AG04449 (cell line): ENCODE measurements at regions of chr3 and their contacts with region 1.

Region 1: DNA sequence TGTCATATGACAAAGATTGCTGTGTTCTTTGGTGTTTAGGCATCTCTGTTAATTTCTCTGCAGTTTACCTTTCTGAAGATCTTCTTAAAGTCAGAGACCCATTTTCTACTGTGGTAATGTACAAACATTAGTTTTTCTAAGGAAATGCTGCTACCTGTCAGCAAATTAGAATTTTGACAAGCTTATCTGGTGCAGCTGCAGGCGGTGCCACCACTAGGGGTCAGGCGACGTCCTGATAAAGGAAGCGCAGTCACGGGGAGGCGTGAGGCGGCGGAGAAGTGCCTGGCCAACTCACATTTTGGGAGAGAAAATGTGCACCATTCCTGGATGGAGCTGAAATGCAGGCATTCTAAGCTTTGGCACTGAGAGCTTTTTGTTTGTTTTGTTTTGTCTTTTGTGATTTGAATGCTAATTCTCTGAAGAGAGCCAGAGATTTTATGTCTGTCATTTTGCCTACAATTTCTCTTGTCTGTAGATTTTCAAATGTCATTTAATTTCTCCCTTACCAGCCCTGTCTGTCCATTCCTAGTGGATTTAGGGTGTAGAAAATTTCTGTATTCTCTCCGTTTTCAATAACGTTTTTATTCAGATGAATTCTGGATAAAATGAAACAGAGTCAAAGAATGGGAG is 24.9 kb upstream of the SIAH2 start:
- DNase-seq: no peak
- H3K4me3 ChIP-seq: no peak overlapping the region
- CTCF ChIP-seq: peak; percentile 91

Region 2: GRCh38 chr3:150763122-150763841 is 24.6 kb before region 1 on chr3 and contains the start of gene SIAH2:
- CTCF ChIA-PET with region 1: interaction called, 53 read pairs
- POLR2A ChIA-PET with region 1: interaction called, 3 read pairs
- DNase-seq: peak; percentile 73
- H3K4me3 ChIP-seq: peak within 1 kb of the TSS; percentile 89
- CTCF ChIP-seq: no peak

Region 3: DNA sequence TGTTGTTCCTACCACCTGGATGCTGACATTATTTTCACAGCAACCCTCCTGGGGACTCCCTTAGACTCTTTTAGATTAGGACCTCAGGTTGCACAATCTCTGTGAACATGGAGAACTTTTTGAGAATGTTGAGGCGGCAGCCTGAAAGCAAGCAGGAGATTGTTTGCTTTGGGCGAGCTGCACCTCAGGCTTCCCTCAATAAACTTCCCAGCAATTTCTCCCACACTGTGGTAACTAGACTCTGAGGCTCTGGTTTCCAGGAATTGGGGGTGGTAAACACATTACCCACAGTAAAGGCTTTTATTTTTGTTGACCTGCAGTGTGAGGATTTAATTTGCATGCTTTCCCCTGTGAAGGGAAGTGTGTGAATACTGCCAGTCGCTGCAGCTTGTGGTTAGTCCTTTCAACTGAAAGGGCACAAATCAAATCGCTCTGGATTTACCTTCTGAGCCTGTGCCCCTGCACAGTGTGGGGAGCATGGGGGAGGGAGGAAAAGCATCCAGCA is 10.3 kb after region 1 on chr3:
- CTCF ChIA-PET with region 1: interaction called, 20 read pairs
- POLR2A ChIA-PET with region 1: no interaction called
- DNase-seq: no peak
- H3K4me3 ChIP-seq: no peak overlapping the region
- CTCF ChIP-seq: no peak

Region 4: DNA sequence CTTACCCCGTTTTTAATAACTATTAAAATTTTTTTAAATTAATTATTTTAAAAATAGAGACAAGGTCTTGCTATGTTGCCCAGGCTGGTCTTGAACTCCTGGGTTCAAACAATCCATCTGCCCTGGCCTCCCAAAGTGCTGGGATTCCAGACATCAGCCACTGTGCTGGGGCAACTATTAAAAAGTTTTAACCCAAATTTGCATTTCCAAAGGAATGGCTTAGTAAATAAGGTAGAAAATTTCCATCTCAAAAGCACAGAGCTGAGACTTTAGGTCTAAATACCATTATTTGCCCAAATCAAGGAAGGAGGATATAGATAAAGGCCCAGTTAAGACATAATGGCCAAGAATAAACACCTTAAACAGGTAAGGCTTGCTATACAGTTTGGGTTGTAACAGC is 61.0 kb after region 1 on chr3:
- CTCF ChIA-PET with region 1: interaction called, 17 read pairs
- POLR2A ChIA-PET with region 1: no interaction called
- DNase-seq: no peak
- H3K4me3 ChIP-seq: no peak overlapping the region
- CTCF ChIP-seq: no peak

Region 5: DNA sequence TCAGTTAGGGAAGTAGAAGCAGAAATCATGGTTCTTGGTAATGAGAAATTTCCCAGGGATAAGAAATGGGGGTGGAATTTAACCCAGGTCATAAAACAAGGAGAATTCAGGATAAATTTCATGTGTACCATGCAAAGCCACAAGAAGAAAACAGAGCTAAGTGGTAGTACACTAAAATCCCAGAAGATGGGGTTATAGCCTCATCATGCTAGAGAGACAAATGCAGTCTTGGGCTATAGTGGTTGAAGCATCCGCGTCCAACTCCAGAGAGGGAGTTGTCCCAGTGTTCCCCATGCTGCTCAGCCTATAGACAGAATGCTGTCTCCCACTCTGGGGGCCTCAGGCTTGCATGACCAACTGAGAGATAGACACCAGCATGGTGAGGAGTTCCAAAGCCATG is 220.8 kb after region 1 on chr3:
- CTCF ChIA-PET with region 1: no interaction called
- POLR2A ChIA-PET with region 1: no interaction called
- DNase-seq: no peak
- H3K4me3 ChIP-seq: no peak overlapping the region
- CTCF ChIP-seq: peak; percentile 42

Region 6: DNA sequence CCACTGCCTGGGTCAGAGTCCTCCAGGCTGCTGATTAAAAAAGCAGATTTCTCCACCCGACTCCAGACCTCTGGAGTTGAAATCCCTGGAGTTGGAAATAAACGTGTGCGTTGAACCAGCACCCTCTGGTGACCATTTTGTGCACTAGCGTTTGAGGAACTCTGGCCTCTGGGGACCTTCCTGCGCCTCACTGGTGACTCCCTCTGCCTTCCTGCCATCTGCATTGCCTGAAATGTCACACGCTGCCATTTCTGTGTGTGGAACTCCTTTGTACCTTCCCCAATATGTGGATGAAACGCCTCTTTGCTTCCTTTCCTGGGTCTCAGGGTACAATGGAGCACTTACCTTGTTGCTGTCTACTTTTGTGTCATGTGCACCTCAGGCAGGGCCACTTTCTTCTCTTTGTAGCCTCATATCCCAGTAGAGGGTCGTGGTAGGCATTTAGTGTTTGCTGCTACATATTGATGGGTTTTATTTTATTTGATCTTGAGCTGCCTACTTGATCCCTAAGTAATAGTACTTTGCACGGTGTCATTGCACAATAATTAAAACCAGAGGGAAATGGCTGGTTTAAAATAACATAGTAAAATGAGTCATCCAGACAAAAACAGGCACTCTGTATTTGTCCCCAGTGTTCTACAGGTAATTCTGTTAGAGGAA is 358.3 kb after region 1 on chr3:
- CTCF ChIA-PET with region 1: interaction called, 24 read pairs
- POLR2A ChIA-PET with region 1: no interaction called
- DNase-seq: no peak
- H3K4me3 ChIP-seq: no peak overlapping the region
- CTCF ChIP-seq: peak; percentile 79